Breast epithelium (tissue), 4 donors: ENCODE measurements at regions of chr2 and their contacts with region 1.

Region 1: GRCh38 chr2:14827626-14828025 is 195.1 kb downstream of the LRATD1 start:
- DNase-seq: no peak
- H3K4me3 ChIP-seq: no peak overlapping the region
- H3K27ac ChIP-seq: no peak overlapping the region
- H3K4me1 ChIP-seq: no peaks in the 10 kb centered on the region
- H3K27me3 ChIP-seq: no peaks in the 10 kb centered on the region
- CTCF ChIP-seq: no peak
- POLR2A ChIP-seq: no peak

Region 2: GRCh38 chr2:14790041-14790640 is 37.5 kb before region 1 on chr2:
- intact Hi-C with region 1: loop called (anchors 2 kb)
- DNase-seq: no peak
- H3K4me3 ChIP-seq: no peak overlapping the region
- H3K27ac ChIP-seq: no peak overlapping the region
- H3K4me1 ChIP-seq: no peaks in the 10 kb centered on the region
- H3K27me3 ChIP-seq: no peaks in the 10 kb centered on the region
- CTCF ChIP-seq: no peak
- POLR2A ChIP-seq: no peak